ENCODE measurements at regions of chr7 and their contacts with region 1.

Region 1: GRCh38 chr7:131424219-131424822 is 96.6 kb downstream of the MKLN1 start:
- DNase-seq: peak in 4 of 14 experiments; percentile 17 to 62 (median 60)
- ATAC-seq: peak; percentile 93
- H3K4me3 ChIP-seq: no peak overlapping the region
- H3K4me3 Mint-ChIP-seq: no peak overlapping the region
- H3K27ac ChIP-seq: no peak overlapping the region
- H3K27ac Mint-ChIP-seq: no peak overlapping the region
- H3K4me1 ChIP-seq: no peaks in the 10 kb centered on the region
- H3K4me1 Mint-ChIP-seq: peaks cover 18% of the 10 kb centered on the region
- H3K27me3 ChIP-seq: no peaks in the 10 kb centered on the region
- H3K27me3 Mint-ChIP-seq: no peaks in the 10 kb centered on the region
- CTCF ChIP-seq: peak; percentile 64

Region 2: DNA sequence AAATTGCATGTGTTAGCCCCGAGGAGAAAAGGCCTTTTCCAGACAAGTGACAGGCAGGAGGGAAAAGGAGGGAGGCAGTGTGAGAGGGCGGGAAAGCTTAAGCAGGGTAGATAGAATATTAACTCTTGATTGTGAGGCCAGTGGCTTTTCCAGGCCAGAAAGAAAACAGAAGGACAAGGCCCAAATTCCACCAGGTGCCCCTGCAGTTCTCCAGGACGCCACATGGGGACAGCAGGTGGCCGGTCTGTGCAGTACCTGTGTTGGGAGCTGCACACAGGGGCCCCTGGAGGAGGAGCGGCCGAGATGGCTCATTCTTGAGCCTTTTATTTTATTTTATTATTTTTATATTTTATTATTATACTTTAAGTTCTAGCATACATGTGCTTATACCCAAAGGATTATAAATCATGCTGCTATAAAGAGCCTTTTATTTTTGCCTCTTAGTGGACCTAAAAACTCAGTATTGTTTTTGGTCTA is 549.0 kb before region 1 on chr7:
- CTCF ChIA-PET with region 1: no interaction called
- POLR2A ChIA-PET with region 1: no interaction called
- intact Hi-C with region 1: loop called in 1 of 2 experiments (anchors 5 kb)
- DNase-seq: peak in 13 of 14 experiments; percentile 22 to 69 (median 41)
- ATAC-seq: peak; percentile 84
- H3K4me3 ChIP-seq: no peak overlapping the region
- H3K4me3 Mint-ChIP-seq: no peak overlapping the region
- H3K27ac ChIP-seq: no peak overlapping the region
- H3K27ac Mint-ChIP-seq: no peak overlapping the region
- H3K4me1 ChIP-seq: no peaks in the 10 kb centered on the region
- H3K4me1 Mint-ChIP-seq: peaks cover 29% of the 10 kb centered on the region
- H3K27me3 ChIP-seq: no peaks in the 10 kb centered on the region
- H3K27me3 Mint-ChIP-seq: no peaks in the 10 kb centered on the region
- CTCF ChIP-seq: peak; percentile 68

Region 3: DNA sequence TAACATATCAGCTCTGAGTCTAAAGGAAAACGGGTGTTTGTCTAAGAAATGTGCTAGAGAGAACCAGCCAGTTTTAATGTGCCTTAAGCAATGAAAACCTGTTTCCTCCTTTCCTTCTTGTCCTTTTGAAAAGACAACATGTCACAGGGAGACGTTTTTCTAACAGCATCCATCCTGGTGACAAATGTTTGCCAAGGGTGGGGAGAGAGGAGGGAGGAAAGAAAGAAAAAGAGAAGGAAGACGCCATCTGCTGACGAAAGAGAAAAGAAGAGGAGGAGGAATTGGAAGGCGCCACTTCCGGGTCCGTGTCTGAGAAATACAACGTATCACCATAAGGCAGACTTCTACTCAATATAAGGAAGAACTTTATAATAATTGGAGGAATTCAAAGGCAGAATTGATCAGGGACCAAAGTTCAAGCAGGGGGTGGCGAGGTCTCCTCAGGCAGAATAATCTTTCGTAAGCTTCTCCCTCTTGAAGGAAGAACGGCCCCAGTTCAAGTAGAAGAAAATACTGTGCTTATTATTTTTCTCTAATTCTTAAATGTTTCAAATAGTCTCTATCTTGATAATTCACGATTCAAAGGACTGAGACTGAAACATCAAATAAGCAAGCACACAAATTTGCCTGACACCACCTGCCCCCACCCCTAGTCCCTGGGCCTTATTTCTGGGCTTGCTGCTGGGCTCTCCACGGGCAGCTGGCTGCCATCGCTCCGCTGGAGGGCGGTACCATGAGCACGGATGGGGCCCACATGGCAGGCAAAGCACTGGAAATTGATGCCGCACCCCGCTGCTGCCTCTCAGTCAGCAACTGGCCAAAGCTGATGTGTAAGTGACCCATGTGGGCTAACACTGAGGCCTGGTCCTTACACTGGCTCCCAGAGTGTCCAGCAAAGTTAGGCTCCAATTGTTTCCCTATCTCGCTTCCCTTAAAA is 416.7 kb before region 1 on chr7:
- CTCF ChIA-PET with region 1: no interaction called
- POLR2A ChIA-PET with region 1: no interaction called
- intact Hi-C with region 1: no loop called
- DNase-seq: peak in 11 of 14 experiments; percentile 27 to 83 (median 48)
- ATAC-seq: peak; percentile 60
- H3K4me3 ChIP-seq: no peak overlapping the region
- H3K4me3 Mint-ChIP-seq: peak overlapping the region; percentile 40
- H3K27ac ChIP-seq: peak overlapping the region; percentile 36 to 71
- H3K27ac Mint-ChIP-seq: peak overlapping the region; percentile 76
- H3K4me1 ChIP-seq: peaks cover 61% of the 10 kb centered on the region
- H3K4me1 Mint-ChIP-seq: peaks cover 93% of the 10 kb centered on the region
- H3K27me3 ChIP-seq: no peaks in the 10 kb centered on the region
- H3K27me3 Mint-ChIP-seq: no peaks in the 10 kb centered on the region
- CTCF ChIP-seq: peak; percentile 77

Region 4: DNA sequence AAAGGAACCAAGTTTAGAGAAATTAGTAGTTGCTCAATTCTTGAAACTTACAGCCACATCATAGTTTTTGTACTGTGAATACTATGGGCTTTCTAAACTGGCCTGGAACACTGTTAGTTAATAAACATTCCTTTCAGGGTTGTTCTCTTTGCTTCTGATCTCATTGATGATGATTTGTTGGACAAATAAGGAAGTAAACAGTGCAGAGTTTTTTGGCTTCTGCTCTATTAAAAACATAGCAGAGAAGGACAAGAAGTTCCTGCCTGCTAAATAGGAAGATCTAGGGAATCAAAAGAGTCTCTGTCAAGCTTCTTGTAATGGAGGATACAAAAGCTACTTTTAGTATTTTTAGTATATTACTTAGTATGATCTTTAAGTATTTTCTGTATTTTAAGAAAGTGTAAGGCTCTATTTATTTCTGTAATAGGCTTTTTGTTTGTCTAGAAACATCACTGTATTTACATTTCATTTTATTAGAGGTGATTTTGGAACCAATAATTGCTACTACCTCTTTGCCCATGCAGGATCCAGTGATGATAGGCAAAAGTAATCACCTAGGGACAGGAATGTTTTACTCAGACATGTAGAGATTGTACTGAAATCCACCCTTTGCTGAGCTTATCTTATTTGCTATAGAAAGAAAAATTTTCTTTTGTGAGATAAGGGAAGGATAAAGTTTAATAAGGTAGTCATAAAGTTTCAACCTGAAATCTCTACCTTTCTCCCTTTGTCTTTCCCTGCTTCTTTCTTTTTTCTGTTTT is 23.3 kb before region 1 on chr7:
- CTCF ChIA-PET with region 1: no interaction called
- POLR2A ChIA-PET with region 1: no interaction called
- intact Hi-C with region 1: loop called in 1 of 2 experiments (anchors 1 kb)
- DNase-seq: no peak
- ATAC-seq: no peak
- H3K4me3 ChIP-seq: no peak overlapping the region
- H3K4me3 Mint-ChIP-seq: no peak overlapping the region
- H3K27ac ChIP-seq: no peak overlapping the region
- H3K27ac Mint-ChIP-seq: no peak overlapping the region
- H3K4me1 ChIP-seq: no peaks in the 10 kb centered on the region
- H3K4me1 Mint-ChIP-seq: peaks cover 26% of the 10 kb centered on the region
- H3K27me3 ChIP-seq: no peaks in the 10 kb centered on the region
- H3K27me3 Mint-ChIP-seq: no peaks in the 10 kb centered on the region
- CTCF ChIP-seq: no peak

Region 5: GRCh38 chr7:132059141-132059540 is 634.8 kb after region 1 on chr7:
- CTCF ChIA-PET with region 1: no interaction called
- POLR2A ChIA-PET with region 1: no interaction called
- intact Hi-C with region 1: no loop called
- DNase-seq: no peak
- ATAC-seq: no peak
- H3K4me3 ChIP-seq: no peak overlapping the region
- H3K4me3 Mint-ChIP-seq: no peak overlapping the region
- H3K27ac ChIP-seq: no peak overlapping the region
- H3K27ac Mint-ChIP-seq: no peak overlapping the region
- H3K4me1 ChIP-seq: no peaks in the 10 kb centered on the region
- H3K4me1 Mint-ChIP-seq: no peaks in the 10 kb centered on the region
- H3K27me3 ChIP-seq: no peaks in the 10 kb centered on the region
- H3K27me3 Mint-ChIP-seq: peaks cover 11% of the 10 kb centered on the region
- CTCF ChIP-seq: no peak